ENCODE measurements at regions of chr4 and their contacts with region 1.

Region 1: GRCh38 chr4:37802068-37802666 is 24.3 kb upstream of the PGM2 start:
- DNase-seq: peak; percentile 48
- ATAC-seq: peak; percentile 98
- H3K4me3 ChIP-seq: no peak overlapping the region
- H3K27ac ChIP-seq: no peak overlapping the region
- H3K4me1 ChIP-seq: no peaks in the 10 kb centered on the region
- H3K27me3 ChIP-seq: no peaks in the 10 kb centered on the region
- CTCF ChIP-seq: peak; percentile 80

Region 2: DNA sequence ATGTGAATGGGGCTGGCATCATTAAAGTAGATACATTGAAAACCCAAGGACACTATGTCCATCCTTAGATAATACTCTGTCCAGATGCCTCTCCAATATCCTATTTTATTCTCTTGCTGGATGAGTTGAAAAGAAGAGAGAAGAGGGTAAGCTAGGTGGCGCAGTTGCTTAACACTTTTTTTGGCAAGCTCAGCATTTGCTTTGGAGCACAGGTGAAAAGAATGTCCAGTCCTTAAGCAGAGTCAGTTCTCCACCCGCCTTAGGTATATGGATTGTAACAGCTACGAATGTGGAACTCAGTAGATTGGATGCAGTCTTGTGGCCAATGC is 349.3 kb before region 1 on chr4:
- CTCF ChIA-PET with region 1: interaction called, 5 read pairs
- POLR2A ChIA-PET with region 1: no interaction called
- in situ Hi-C with region 1: no loop called
- intact Hi-C with region 1: loop called (anchors 5 kb)
- DNase-seq: peak; percentile 50
- ATAC-seq: peak; percentile 82
- H3K4me3 ChIP-seq: peak overlapping the region in 1 of 2 experiments; percentile 60; a peak in 2 of 4 replicates
- H3K27ac ChIP-seq: no peak overlapping the region
- H3K4me1 ChIP-seq: no peaks in the 10 kb centered on the region
- H3K27me3 ChIP-seq: peaks cover 13% of the 10 kb centered on the region
- CTCF ChIP-seq: peak; percentile 69

Region 3: GRCh38 chr4:37603070-37603468 is 199.1 kb before region 1 on chr4:
- CTCF ChIA-PET with region 1: interaction called, 8 read pairs
- POLR2A ChIA-PET with region 1: no interaction called
- in situ Hi-C with region 1: no loop called
- intact Hi-C with region 1: loop called (anchors 5 kb)
- DNase-seq: peak; percentile 53
- ATAC-seq: peak; percentile 95
- H3K4me3 ChIP-seq: 0 out of 4 replicates have a peak overlapping the region, but pooled peaks of 1 of the 2 experiments have one; percentile 16
- H3K27ac ChIP-seq: no peak overlapping the region
- H3K4me1 ChIP-seq: no peaks in the 10 kb centered on the region
- H3K27me3 ChIP-seq: no peaks in the 10 kb centered on the region
- CTCF ChIP-seq: peak; percentile 91

Region 4: DNA sequence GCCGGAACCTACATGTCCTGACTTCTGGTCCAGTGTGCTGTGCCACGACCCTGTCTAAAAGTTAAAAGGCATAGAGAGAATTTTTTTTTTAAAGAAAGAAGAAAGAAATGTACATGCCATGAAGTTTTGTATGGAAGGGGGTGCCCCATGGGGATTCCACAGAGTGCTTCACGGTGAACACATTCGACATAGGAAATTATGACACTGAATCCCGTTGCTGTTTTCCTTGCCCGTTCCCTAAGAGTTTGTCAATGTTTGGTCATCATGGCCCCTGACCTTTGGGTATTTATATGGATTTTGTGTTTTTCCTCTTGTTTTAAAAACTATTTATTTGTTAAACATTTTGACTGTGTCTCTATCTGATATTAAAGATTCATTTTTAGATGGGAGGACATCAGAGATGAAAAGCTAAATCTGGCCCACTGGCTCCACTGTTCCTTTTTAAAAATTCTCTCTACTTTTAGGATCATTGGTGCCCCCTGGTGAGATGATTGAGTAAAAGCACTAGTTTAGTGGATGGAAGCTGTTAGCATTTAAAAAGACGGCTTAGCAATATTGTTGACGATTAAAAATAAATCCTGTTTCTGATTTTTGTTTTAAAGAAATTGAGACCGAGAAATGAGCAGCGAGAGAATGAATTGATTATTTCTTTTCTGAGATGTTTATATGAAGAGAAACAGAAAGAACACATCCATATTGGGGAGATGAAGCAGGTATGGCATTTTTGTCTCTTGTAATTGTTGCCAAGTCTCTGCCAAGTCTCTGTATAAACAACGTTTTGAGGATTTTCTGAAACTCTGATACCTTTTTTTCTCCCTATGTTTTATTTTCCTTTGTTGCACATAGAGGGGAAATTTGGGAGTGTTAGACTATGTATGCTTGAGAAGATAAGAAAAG is 233.1 kb after region 1 on chr4:
- CTCF ChIA-PET with region 1: interaction called, 8 read pairs
- POLR2A ChIA-PET with region 1: no interaction called
- in situ Hi-C with region 1: no loop called
- intact Hi-C with region 1: loop called (anchors 10 kb)
- DNase-seq: peak; percentile 13
- ATAC-seq: no peak
- H3K4me3 ChIP-seq: no peak overlapping the region
- H3K27ac ChIP-seq: no peak overlapping the region
- H3K4me1 ChIP-seq: no peaks in the 10 kb centered on the region
- H3K27me3 ChIP-seq: no peaks in the 10 kb centered on the region
- CTCF ChIP-seq: peak; percentile 63; the same call in 1 of the 2 replicates

Measured in Panc1 (cell line).